BJ (cell line): ENCODE measurements at regions of chr15 and their contacts with region 1.

Region 1: DNA sequence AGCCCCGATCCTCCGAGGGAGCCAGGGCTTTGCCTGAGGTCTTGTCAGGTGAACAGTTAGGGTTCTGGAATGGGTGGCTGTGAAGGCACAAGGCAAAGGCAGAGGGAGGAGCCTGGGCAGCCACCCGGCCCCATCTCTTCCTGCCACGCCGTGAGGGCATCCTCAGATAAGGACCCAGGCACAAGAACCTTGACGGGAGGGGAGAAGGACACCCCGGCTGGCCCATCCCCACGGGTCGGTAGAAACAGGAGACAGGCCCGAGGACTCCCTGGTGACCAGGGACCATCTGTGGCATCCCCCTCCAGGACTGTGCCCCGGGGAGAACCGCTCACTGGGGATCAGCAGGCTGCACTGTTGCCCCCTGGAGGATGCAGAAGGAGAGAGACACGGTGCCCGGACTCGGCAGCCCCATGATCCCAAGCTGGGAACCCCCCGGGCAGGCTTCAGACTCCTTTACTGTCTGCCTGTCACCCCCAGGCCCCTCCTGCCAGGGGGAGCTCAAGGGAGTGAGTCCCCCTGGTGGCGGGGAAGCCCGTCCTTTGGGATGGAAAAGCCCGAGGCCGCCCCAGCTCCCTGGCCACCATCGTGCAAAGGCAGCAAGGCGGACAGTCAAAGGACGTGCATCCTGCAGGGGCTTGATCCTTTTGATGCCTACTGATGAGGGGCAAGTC is 12.3 kb upstream of the PCSK6 start:
- DNase-seq: no peak
- H3K4me3 ChIP-seq: no peak overlapping the region
- H3K27me3 ChIP-seq: no peaks in the 10 kb centered on the region; the same call in 1 of the 2 replicates
- CTCF ChIP-seq: peak; percentile 78

Region 2: DNA sequence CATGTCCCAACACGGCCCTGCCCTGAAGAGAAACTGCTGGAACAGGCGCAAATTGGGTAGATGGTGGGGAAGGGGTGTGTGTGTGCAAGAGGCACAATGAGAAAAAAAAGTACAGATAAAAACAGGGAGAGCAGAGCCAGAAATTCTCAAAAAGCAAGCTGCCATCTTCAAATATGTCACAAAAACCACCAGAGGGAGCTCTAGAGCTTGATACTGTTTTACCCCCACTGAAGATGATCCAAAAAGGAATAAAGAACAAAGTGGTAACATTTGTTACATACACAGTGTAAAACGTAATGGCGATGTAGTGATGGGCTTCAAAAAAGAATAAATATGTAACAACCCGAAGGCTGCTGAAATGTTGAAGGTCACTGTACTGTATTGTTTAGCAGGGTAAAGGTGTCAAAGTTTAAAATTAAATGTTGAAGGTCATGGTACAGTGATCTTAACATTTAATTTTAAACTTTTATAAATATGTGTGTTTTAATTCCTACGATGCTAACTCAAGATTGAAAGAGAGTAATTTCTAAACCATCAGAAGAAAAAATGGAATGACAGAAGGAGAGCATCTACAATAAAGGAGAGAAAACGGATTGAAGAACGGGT is 212.8 kb before region 1 on chr15:
- CTCF ChIA-PET with region 1: interaction called, 16 read pairs
- POLR2A ChIA-PET with region 1: no interaction called
- DNase-seq: no peak
- H3K4me3 ChIP-seq: no peak overlapping the region
- H3K27me3 ChIP-seq: no peaks in the 10 kb centered on the region
- CTCF ChIP-seq: peak; percentile 66

Region 3: DNA sequence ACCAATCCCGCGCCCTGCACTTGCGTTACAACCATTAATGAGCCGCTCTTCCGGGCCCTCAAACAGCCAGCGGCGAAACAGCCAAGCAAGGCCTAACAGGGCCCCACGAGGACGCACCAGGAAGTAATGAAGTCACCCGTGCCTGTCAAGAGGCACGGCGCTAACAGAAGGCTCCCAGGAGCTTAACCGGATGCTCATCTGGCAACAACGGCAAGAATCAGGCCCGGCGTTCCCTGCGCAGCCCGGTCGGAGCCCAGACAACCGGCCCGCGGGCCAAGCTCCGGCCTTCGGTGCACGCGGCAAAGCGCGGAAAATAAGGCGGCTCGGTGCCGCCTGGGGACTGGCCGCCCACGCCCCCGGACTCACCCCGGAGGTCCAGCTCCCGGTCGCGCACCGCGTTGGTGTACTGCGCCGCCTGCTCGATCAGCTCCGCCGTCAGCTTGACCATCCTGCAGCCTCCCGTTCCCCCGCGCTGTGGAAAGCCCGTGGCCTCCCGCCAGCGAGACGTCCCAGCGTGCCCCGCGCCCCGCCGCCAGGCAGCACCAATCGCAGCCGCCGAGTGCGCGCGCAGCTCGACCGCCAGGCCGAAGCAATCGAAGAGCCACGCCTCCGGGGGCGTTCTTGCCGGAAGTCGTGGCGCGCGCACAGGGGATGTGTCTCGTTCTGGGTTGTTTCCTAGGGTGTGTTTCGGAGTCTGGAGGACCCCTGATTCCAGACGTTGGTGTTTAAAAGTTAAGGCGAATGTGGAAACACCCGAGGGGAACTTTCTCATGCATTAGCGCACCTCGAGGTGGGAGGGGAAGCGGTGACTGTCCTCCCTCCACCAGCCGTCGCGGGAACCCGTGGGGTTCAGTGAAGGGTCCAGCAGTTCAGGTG is 206.9 kb before region 1 on chr15 and contains the start of gene SNRPA1:
- CTCF ChIA-PET with region 1: interaction called, 19 read pairs
- POLR2A ChIA-PET with region 1: no interaction called
- DNase-seq: peak; percentile 52
- H3K4me3 ChIP-seq: peak within 1 kb of the TSS; percentile 95
- H3K27me3 ChIP-seq: no peaks in the 10 kb centered on the region
- CTCF ChIP-seq: no peak
- polyA plus RNA-seq, gene SNRPA1: 27.0 and 44.8 TPM in 2 replicates

Region 4: DNA sequence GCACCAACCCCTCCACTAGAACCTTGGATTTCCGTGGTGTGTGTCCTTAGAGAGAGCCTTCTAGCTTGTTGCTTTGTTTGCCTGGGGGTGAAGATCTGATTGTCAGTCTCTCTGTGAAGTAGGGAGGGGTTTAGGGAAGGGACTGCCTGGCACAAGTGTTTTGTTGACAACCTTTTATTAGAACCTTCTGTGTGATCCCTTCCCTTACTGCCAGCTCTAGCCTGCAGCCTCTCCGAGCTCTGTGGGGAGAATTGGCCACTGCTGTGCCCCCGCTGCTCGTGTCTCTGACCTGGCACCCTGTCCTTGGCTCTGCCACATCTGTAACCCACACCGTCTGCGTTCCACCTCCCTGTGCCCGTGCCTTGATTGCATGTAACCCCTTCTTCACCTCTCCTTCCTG is 18.6 kb after region 1 on chr15:
- CTCF ChIA-PET with region 1: interaction called, 10 read pairs
- POLR2A ChIA-PET with region 1: no interaction called
- DNase-seq: no peak
- H3K4me3 ChIP-seq: no peak overlapping the region
- H3K27me3 ChIP-seq: no peaks in the 10 kb centered on the region
- CTCF ChIP-seq: no peak